HEK293T (cell line): ENCODE measurements at regions of chr14 and their contacts with region 1.

Region 1: GRCh38 chr14:59964251-59965007 is 44.5 kb downstream of the LRRC9 start:
- DNase-seq: no peak

Region 2: DNA sequence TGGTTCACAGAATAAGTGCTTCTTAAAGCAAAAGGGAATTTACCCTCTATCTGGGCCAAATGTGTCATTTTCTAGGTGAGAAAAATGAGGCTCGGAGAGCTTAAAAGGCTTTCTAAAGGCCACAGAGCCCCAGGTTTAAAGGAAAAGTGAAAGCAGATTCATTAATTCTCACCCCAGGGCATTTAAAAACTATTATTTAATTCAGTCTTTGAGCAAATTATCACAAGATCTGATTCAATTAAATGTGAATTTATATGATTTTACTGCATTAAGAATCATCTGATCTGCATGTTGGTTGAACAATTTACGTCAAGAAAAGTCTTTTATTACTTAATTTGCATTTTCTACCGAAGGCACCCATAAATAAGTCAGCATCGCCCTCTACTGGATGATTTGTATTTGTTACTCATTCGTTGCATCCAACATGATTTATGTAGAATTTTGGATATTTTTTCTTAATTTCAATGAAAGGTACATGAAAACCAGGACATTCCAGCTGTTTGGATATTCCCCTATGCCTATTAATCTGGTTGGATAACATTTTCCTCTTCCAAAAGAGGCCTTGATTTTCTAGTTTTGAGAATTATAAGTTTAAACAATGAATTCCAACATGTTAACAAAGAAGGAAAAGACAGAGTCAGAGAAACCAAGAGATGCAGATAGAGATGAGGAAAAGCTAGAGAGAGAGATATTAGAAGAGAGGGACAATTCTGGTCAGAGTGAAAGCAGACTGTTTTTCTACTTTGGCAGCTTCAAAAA is 219.9 kb after region 1 on chr14:
- CTCF ChIA-PET with region 1: interaction called, 28 read pairs
- POLR2A ChIA-PET with region 1: no interaction called
- DNase-seq: peak; percentile 36